A673 (cell line): ENCODE measurements at regions of chr11 and their contacts with region 1.

Region 1: GRCh38 chr11:12599408-12600143 is 74.6 kb upstream of the TEAD1 start:
- DNase-seq: peak; percentile 69
- H3K4me3 ChIP-seq: no peak overlapping the region
- H3K27ac ChIP-seq: peak overlapping the region; percentile 77
- H3K4me1 ChIP-seq: peaks cover 47% of the 10 kb centered on the region
- H3K27me3 ChIP-seq: no peaks in the 10 kb centered on the region
- CTCF ChIP-seq: peak; percentile 91

Region 2: DNA sequence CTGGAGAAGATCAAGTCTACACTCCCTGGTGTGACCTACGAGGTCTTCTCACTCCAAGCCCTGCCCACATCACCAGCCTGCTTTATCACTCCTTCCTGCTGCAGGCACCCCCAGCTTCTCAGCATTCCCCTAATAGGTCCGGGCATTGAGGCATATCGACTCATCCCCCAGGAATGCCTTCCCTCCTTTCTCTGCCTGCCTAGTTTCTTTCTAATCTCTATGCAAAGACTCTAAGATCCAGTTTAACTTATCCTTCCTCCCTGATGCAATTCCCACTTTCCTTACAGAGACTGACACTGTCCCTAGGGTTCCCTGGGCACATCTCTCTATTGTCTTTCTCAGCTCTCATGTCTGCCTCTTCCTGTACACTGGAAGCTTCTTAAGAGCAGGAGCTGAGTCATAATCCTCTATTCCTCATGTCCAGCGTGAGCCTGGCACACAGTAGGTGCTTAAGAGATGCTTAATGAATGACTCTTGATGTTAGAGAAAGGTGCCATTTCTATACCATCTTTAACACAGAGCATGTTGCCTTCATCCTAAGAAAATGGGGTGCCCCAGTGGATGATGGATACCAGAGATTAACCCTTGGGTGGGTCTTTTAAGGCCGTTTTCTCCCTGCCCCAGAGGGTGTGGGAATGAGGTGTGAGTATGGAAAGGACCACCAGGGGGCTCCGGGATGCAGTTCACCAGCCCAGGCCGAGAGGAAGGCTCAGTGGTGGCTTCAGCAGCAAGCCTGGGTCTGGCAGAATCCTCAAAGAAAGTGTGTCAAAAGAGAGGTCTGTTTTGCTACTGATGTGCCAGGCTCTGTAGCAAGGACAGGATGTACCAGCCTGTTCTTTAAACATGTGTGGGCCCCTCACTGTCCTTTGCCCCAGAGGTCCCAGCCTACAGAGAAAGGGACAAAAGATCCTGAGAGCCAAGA is 187.5 kb before region 1 on chr11:
- CTCF ChIA-PET with region 1: no interaction called
- POLR2A ChIA-PET with region 1: no interaction called
- intact Hi-C with region 1: loop called (anchors 10 kb)
- DNase-seq: peak; percentile 89
- H3K4me3 ChIP-seq: no peak overlapping the region
- H3K27ac ChIP-seq: peak overlapping the region; percentile 73
- H3K4me1 ChIP-seq: peaks cover 49% of the 10 kb centered on the region
- H3K27me3 ChIP-seq: no peaks in the 10 kb centered on the region
- CTCF ChIP-seq: peak; percentile 79

Region 3: DNA sequence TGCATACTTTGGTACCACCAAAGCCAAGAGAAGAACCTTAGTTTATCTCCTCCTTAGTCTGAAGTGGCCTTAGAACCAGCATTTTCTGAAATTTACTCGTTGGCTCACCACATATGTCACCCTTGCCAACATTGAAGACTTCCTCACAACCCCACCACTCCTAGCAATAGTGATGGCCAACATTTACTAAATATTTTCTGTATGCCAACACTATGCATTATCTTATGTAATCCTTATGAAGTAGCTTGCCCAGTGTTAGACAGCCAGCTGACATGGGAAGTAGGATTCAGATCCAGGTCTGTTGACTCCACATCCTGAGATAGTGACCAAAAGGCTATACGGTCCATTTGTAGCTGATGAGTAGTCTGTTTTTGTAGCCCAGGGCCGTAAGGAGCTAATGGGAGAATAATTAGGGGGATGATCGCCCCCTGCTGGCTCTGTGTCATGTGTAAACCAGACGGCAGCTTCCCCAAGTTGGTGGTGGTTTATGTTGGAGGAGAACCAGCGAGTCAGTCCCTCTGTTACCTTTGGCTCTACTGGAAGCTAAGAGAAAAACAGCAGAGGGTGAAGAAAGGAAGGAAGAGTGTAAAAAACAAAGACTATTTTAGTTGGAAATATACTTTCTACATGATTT is 289.1 kb after region 1 on chr11:
- CTCF ChIA-PET with region 1: interaction called, 12 read pairs
- POLR2A ChIA-PET with region 1: no interaction called
- intact Hi-C with region 1: no loop called
- DNase-seq: peak; percentile 83
- H3K4me3 ChIP-seq: no peak overlapping the region
- H3K27ac ChIP-seq: no peak overlapping the region
- H3K4me1 ChIP-seq: peaks cover 12% of the 10 kb centered on the region
- H3K27me3 ChIP-seq: no peaks in the 10 kb centered on the region
- CTCF ChIP-seq: peak; percentile 84